CD4-positive, alpha-beta memory T cell (primary cell): ENCODE measurements at regions of chr2 and their contacts with region 1.

Region 1: DNA sequence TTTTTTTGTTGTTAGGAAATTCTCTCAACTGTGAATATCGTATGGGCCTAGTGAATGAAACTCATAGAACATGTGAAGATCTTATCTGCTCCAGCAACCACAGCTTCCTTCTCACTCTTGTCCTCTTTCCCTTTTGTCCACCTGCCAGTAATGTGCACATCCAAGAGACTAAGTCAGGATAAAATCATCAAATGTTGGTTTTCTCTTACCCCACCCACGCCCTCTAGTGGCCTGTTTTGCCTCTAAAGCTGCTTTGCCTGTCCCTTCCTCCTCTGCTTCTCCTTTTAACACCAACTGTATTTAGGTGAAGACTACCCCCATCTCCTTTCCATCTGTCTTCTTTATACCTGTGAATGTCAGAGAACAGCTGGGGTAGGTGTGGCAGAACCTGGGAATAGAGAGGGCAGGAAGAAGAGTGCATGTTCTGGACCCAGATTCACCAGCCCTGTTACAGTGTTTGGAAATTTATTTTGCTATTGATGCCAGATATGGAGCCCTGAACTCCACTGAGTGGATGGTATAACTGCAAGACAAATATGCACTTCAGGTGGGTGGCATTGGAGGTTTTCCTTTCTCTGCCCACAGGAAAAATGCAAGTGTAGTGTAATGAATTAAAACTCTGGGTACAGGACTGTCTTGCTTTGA is 8.4 kb upstream of the MGAT5 start:
- DNase-seq: peak; percentile 66 to 79 (median 69)
- H3K4me3 ChIP-seq: no peak overlapping the region
- H3K4me3 Mint-ChIP-seq: peak overlapping the region in 7 of 8 donors; percentile 37 to 73 (median 65)
- H3K27ac ChIP-seq: no peak overlapping the region
- H3K27ac Mint-ChIP-seq: peak overlapping the region; percentile 13 to 88 (median 81)
- H3K4me1 ChIP-seq: peaks cover 99% of the 10 kb centered on the region
- H3K4me1 Mint-ChIP-seq: peaks cover 70 to 97% (median 87%) of the 10 kb centered on the region in 4 donors
- H3K27me3 ChIP-seq: no peaks in the 10 kb centered on the region
- H3K27me3 Mint-ChIP-seq: no peaks in the 10 kb centered on the region

Region 2: DNA sequence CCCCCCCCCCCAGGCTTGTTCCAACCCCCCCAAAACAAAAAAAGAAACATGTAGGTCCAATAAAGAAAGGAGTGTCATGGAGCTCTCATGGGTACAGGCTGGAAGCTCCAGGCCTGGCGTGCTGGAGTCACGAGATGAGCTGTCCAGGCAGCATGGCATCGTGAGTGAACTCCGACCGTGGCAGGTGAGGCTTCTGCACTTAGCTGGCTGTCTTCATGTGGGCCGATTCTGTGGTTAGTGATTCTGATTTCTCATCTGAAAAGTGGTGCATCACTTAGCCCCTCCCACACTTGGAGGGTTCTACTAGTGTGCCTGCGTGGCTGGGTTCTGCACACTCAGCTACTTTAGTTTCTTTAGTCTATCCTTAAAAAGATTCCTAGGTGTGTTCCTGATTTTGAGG is 118.0 kb before region 1 on chr2:
- CTCF ChIA-PET with region 1: interaction called, 233 read pairs
- POLR2A ChIA-PET with region 1: interaction called, 5 read pairs
- intact Hi-C with region 1: no loop called
- DNase-seq: peak; percentile 21 to 59 (median 34)
- H3K4me3 ChIP-seq: no peak overlapping the region
- H3K4me3 Mint-ChIP-seq: peak overlapping the region in 7 of 8 donors; percentile 47 to 82 (median 63)
- H3K27ac ChIP-seq: no peak overlapping the region
- H3K27ac Mint-ChIP-seq: peak overlapping the region; percentile 12 to 85 (median 73)
- H3K4me1 ChIP-seq: peaks cover 82% of the 10 kb centered on the region
- H3K4me1 Mint-ChIP-seq: peaks cover 67 to 92% (median 80%) of the 10 kb centered on the region in 4 donors
- H3K27me3 ChIP-seq: no peaks in the 10 kb centered on the region
- H3K27me3 Mint-ChIP-seq: no peaks in the 10 kb centered on the region

Region 3: DNA sequence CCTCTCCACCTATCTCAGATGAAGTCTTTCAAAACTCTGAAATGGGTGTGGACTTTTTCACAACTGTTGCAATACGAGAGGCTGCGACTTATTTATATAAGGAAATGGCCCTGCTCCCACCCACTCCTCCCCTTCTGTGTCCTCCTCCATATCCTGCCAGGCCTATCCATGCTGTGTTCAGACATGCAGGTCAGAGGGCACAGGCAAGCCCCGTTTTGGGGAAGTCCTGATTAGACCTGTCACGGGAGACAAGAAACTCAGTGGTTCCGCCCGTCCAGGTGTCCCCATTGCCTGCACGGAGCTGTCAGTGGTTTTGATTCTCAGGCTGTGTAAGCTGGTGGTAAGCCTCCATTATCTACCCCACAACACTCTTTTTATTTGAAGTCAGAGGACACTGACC is 91.2 kb before region 1 on chr2:
- CTCF ChIA-PET with region 1: no interaction called
- POLR2A ChIA-PET with region 1: no interaction called
- intact Hi-C with region 1: no loop called
- DNase-seq: no peak
- H3K4me3 ChIP-seq: no peak overlapping the region
- H3K4me3 Mint-ChIP-seq: no peak overlapping the region
- H3K27ac ChIP-seq: no peak overlapping the region
- H3K27ac Mint-ChIP-seq: peak overlapping the region in 6 of 7 donors; percentile 20 to 79 (median 54)
- H3K4me1 ChIP-seq: peaks cover 23% of the 10 kb centered on the region
- H3K4me1 Mint-ChIP-seq: peaks cover 39 to 73% (median 55%) of the 10 kb centered on the region in 4 donors
- H3K27me3 ChIP-seq: no peaks in the 10 kb centered on the region
- H3K27me3 Mint-ChIP-seq: no peaks in the 10 kb centered on the region

Region 4: GRCh38 chr2:134207564-134208209 is 37.8 kb before region 1 on chr2:
- CTCF ChIA-PET with region 1: interaction called, 76 read pairs
- POLR2A ChIA-PET with region 1: interaction called, 11 read pairs
- intact Hi-C with region 1: loop called (anchors 5 kb)
- DNase-seq: peak; percentile 58 to 68 (median 64)
- H3K4me3 ChIP-seq: no peak overlapping the region
- H3K4me3 Mint-ChIP-seq: peak overlapping the region in 2 of 8 donors; percentile 4 to 50
- H3K27ac ChIP-seq: no peak overlapping the region
- H3K27ac Mint-ChIP-seq: peak overlapping the region in 5 of 7 donors; percentile 25 to 80 (median 63)
- H3K4me1 ChIP-seq: peaks cover 53% of the 10 kb centered on the region
- H3K4me1 Mint-ChIP-seq: peaks cover 10 to 21% (median 18%) of the 10 kb centered on the region in 4 donors
- H3K27me3 ChIP-seq: no peaks in the 10 kb centered on the region
- H3K27me3 Mint-ChIP-seq: no peaks in the 10 kb centered on the region

Region 5: DNA sequence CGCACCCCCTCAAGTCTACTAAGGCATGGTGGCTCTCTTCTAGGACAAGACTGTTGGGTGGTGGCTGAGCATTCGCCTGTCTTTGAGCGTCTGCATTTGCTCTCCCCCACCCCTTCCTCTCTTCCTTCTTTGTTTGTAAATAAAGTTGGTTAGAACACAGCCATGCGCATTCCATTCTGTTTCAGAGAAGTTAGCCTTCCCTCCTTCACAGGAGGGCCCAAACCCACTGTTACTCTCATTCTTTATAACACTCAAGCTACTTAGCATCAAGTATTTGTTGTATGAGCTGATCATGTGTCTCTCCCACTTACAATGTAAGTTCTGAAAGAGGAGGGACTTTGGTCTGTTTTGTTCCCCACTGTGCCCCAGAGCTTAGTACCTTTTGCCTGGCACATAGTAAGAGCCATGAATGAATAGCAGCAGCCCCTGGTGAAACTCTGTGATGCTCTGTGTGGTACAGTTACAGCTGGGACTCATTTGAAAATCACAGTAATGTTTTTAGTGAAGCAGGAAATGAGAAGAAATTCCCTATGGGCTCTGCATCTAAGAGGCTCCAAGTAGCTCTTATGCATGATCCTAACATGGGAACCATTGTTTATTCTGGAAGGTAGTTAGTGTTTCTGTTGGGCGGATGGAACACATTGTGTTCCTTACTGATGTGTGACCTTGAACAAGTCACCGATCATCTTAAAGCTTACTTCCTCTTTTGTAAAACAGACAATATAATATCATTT is 16.1 kb after region 1 on chr2:
- CTCF ChIA-PET with region 1: interaction called, 20 read pairs
- POLR2A ChIA-PET with region 1: interaction called, 4 read pairs
- intact Hi-C with region 1: loop called (anchors 1 kb)
- DNase-seq: no peak
- H3K4me3 ChIP-seq: no peak overlapping the region
- H3K4me3 Mint-ChIP-seq: peak overlapping the region; percentile 2 to 59 (median 44)
- H3K27ac ChIP-seq: no peak overlapping the region
- H3K27ac Mint-ChIP-seq: peak overlapping the region; percentile 48 to 89 (median 86)
- H3K4me1 ChIP-seq: peaks cover 70% of the 10 kb centered on the region
- H3K4me1 Mint-ChIP-seq: peaks cover 67 to 80% (median 68%) of the 10 kb centered on the region in 4 donors
- H3K27me3 ChIP-seq: no peaks in the 10 kb centered on the region
- H3K27me3 Mint-ChIP-seq: no peaks in the 10 kb centered on the region

Region 6: DNA sequence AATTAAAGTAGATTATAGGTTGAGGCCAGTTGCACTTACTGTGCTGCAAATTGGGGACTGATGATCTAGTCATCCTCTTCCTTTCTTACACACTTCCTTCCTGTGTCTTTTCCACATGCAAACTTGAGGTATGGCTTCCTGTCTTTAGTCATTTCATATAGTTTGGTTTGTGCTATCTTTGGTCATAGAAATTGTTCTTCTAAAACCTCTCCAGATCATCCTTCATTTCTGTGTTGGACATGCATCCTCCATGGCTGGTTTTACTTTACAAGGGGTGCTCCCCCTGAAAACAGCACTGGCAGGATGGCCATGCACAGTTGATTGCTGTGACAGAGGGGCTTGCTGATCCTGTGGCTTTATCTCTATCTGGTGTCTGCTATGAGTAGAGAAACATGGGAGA is 44.9 kb after region 1 on chr2:
- CTCF ChIA-PET with region 1: interaction called, 15 read pairs
- POLR2A ChIA-PET with region 1: interaction called, 4 read pairs
- intact Hi-C with region 1: loop called (anchors 1 kb)
- DNase-seq: peak in 3 of 5 donors; percentile 23 to 34 (median 30)
- H3K4me3 ChIP-seq: peak overlapping the region in 1 of 2 donors; percentile 16
- H3K4me3 Mint-ChIP-seq: no peak overlapping the region
- H3K27ac ChIP-seq: no peak overlapping the region
- H3K27ac Mint-ChIP-seq: no peak overlapping the region
- H3K4me1 ChIP-seq: peaks cover 97% of the 10 kb centered on the region
- H3K4me1 Mint-ChIP-seq: peaks cover 18 to 43% (median 33%) of the 10 kb centered on the region in 4 donors
- H3K27me3 ChIP-seq: no peaks in the 10 kb centered on the region
- H3K27me3 Mint-ChIP-seq: no peaks in the 10 kb centered on the region

Region 7: DNA sequence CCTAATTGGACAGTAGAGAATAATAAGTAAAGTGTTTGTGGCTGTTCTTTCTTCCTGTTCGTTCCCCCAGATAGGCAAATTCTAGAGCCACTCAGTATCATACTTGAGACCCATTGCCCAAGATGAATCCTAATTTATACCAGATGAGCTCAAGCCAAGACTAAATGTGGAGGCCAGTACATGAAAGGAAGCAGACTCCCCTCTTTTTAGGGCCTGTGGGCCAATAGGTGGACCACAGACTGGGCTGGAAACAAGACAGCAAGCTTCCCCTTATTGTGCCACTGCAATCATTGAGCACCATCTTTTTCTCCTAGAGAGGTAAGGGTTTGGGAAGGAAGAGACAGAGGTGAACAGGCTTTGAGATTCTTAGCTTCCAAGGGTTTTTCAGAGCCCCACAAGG is 150.3 kb after region 1 on chr2:
- CTCF ChIA-PET with region 1: no interaction called
- POLR2A ChIA-PET with region 1: no interaction called
- intact Hi-C with region 1: no loop called
- DNase-seq: no peak
- H3K4me3 ChIP-seq: no peak overlapping the region
- H3K4me3 Mint-ChIP-seq: no peak overlapping the region
- H3K27ac ChIP-seq: no peak overlapping the region
- H3K27ac Mint-ChIP-seq: peak overlapping the region in 3 of 7 donors; percentile 35 to 68 (median 60)
- H3K4me1 ChIP-seq: peaks cover 11% of the 10 kb centered on the region
- H3K4me1 Mint-ChIP-seq: peaks cover 9 to 26% (median 23%) of the 10 kb centered on the region in 4 donors
- H3K27me3 ChIP-seq: no peaks in the 10 kb centered on the region
- H3K27me3 Mint-ChIP-seq: no peaks in the 10 kb centered on the region

Region 8: GRCh38 chr2:134570676-134571075 is 325.2 kb after region 1 on chr2:
- CTCF ChIA-PET with region 1: no interaction called
- POLR2A ChIA-PET with region 1: no interaction called
- intact Hi-C with region 1: no loop called
- DNase-seq: no peak
- H3K4me3 ChIP-seq: no peak overlapping the region
- H3K4me3 Mint-ChIP-seq: no peak overlapping the region
- H3K27ac ChIP-seq: no peak overlapping the region
- H3K27ac Mint-ChIP-seq: peak overlapping the region in 1 of 7 donors; percentile 20
- H3K4me1 ChIP-seq: no peaks in the 10 kb centered on the region
- H3K4me1 Mint-ChIP-seq: no peaks in the 10 kb centered on the region
- H3K27me3 ChIP-seq: no peaks in the 10 kb centered on the region
- H3K27me3 Mint-ChIP-seq: peaks cover under 1 to 2% of the 10 kb centered on the region in 2 donors

Region 9: GRCh38 chr2:134918526-134919340 is 673.3 kb after region 1 on chr2 and contains the start of gene CCNT2:
- CTCF ChIA-PET with region 1: no interaction called
- POLR2A ChIA-PET with region 1: no interaction called
- intact Hi-C with region 1: loop called (anchors 10 kb)
- DNase-seq: peak; percentile 99 to 100 (median 100)
- H3K4me3 ChIP-seq: peak within 1 kb of the TSS; percentile 68 to 94
- H3K4me3 Mint-ChIP-seq: peak within 1 kb of the TSS; percentile 90 to 99 (median 97)
- H3K27ac ChIP-seq: peak within 1 kb of the TSS; percentile 95
- H3K27ac Mint-ChIP-seq: peak within 1 kb of the TSS; percentile 93 to 99 (median 98)
- H3K4me1 ChIP-seq: peaks cover 52% of the 10 kb centered on the region
- H3K4me1 Mint-ChIP-seq: peaks cover 22 to 61% (median 43%) of the 10 kb centered on the region in 4 donors
- H3K27me3 ChIP-seq: no peaks in the 10 kb centered on the region
- H3K27me3 Mint-ChIP-seq: peaks cover 0 to 4% of the 10 kb centered on the region in 2 donors
- total RNA-seq, gene CCNT2: 75.4 to 80.6 TPM